ENCODE measurements at regions of chr2 and their contacts with region 1.

Region 1: DNA sequence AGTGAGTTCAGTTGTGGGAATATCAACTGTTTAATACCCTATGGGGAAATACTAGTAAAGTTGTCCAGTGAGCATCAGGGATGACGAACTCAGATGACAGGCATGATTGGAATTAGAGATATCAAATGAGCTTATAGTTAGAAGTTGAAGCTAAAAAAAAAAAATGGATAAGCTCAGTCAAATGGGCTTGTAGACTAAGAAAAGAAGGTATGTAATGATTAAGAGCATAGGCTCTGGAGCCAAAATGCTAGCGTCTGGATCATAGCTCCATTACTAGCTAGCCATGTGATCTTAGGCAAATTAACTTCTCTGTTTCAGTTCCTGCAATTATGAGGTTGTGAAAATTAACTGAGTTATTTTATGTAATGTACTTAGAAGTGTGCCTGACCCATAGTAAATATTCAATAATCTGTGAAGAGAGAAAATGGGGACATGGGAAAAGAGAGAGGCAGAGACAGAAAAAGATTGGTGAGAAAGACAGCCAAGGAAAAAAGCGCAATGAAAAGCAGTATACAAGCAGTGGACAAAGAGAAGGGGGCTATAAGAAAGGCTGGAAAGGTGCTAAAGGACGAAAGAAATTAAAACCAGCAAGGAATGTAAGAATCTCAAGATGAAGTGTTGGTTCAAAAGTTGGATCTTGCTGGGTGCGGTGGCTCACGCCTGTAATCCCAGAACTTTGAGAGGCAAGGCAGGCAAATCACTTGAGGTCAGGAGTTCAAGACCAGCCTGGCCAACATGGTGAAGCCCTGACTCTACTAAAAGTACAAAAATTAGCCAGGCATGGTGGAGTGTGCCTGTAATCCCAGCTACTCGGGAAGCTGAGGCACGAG is 95.6 kb upstream of the SLC39A10 start:
- DNase-seq: peak; percentile 92
- H3K4me3 ChIP-seq: no peak overlapping the region
- H3K27ac ChIP-seq: peak overlapping the region; percentile 65
- H3K4me1 ChIP-seq: peaks cover 34% of the 10 kb centered on the region
- H3K27me3 ChIP-seq: no peaks in the 10 kb centered on the region
- CTCF ChIP-seq: no peak

Region 2: GRCh38 chr2:194346193-194346592 is 1215.2 kb before region 1 on chr2:
- CTCF ChIA-PET with region 1: interaction called, 21 read pairs
- dilution Hi-C with region 1: no loop called
- in situ Hi-C with region 1: no loop called
- intact Hi-C with region 1: no loop called
- DNase-seq: no peak
- H3K4me3 ChIP-seq: no peak overlapping the region
- H3K27ac ChIP-seq: no peak overlapping the region
- H3K4me1 ChIP-seq: peaks cover 12% of the 10 kb centered on the region
- H3K27me3 ChIP-seq: no peaks in the 10 kb centered on the region
- CTCF ChIP-seq: no peak

Region 3: DNA sequence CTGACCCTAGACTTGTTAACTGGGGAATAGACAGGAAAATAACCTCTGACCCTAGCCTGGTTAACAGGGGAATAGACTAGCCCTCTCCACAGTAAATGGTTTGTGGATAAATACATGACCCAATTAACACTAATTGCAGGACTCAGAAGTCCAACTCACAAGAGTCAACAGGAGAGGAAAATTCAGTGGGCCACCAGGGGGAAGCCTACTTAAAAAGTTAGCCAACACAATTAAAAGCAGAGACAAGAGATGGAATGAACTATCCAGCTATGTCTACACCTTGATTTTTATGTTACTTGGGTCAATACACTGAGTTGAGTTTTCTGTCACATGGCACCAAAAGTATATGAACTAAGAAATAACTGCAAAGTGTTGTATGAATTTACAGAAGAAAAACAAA is 63.2 kb before region 1 on chr2:
- CTCF ChIA-PET with region 1: no interaction called
- dilution Hi-C with region 1: no loop called
- in situ Hi-C with region 1: no loop called
- intact Hi-C with region 1: loop called (anchors 5 kb)
- DNase-seq: peak; percentile 26
- H3K4me3 ChIP-seq: no peak overlapping the region
- H3K27ac ChIP-seq: no peak overlapping the region
- H3K4me1 ChIP-seq: peaks cover 10% of the 10 kb centered on the region
- H3K27me3 ChIP-seq: no peaks in the 10 kb centered on the region
- CTCF ChIP-seq: peak; percentile 25 to 45

Region 4: GRCh38 chr2:195533771-195534642 is 27.4 kb before region 1 on chr2:
- CTCF ChIA-PET with region 1: interaction called, 3 read pairs
- dilution Hi-C with region 1: no loop called
- in situ Hi-C with region 1: no loop called
- intact Hi-C with region 1: loop called (anchors 1 kb)
- DNase-seq: peak; percentile 84
- H3K4me3 ChIP-seq: no peak overlapping the region
- H3K27ac ChIP-seq: peak overlapping the region; percentile 56
- H3K4me1 ChIP-seq: peaks cover 19% of the 10 kb centered on the region
- H3K27me3 ChIP-seq: no peaks in the 10 kb centered on the region
- CTCF ChIP-seq: peak in 1 of 2 donors; percentile 25

Region 5: GRCh38 chr2:195594248-195594647 is 32.8 kb after region 1 on chr2:
- CTCF ChIA-PET with region 1: no interaction called
- dilution Hi-C with region 1: no loop called
- in situ Hi-C with region 1: no loop called
- intact Hi-C with region 1: no loop called
- DNase-seq: no peak
- H3K4me3 ChIP-seq: no peak overlapping the region
- H3K27ac ChIP-seq: no peak overlapping the region
- H3K4me1 ChIP-seq: no peaks in the 10 kb centered on the region
- H3K27me3 ChIP-seq: no peaks in the 10 kb centered on the region
- CTCF ChIP-seq: no peak

Region 6: GRCh38 chr2:195612611-195613495 is 51.4 kb after region 1 on chr2:
- CTCF ChIA-PET with region 1: no interaction called
- dilution Hi-C with region 1: no loop called
- in situ Hi-C with region 1: no loop called
- intact Hi-C with region 1: loop called (anchors 5 kb)
- DNase-seq: peak; percentile 78
- H3K4me3 ChIP-seq: peak overlapping the region in 2 of 3 experiments; percentile 53 to 71
- H3K27ac ChIP-seq: peak overlapping the region; percentile 88
- H3K4me1 ChIP-seq: peaks cover 19% of the 10 kb centered on the region
- H3K27me3 ChIP-seq: no peaks in the 10 kb centered on the region
- CTCF ChIP-seq: no peak